Activated CD8-positive, alpha-beta T cell treated with anti-CD3 and anti-CD28 coated beads for 36 hours (primary cell): ENCODE measurements at regions of chr14 and their contacts with region 1.

Region 1: DNA sequence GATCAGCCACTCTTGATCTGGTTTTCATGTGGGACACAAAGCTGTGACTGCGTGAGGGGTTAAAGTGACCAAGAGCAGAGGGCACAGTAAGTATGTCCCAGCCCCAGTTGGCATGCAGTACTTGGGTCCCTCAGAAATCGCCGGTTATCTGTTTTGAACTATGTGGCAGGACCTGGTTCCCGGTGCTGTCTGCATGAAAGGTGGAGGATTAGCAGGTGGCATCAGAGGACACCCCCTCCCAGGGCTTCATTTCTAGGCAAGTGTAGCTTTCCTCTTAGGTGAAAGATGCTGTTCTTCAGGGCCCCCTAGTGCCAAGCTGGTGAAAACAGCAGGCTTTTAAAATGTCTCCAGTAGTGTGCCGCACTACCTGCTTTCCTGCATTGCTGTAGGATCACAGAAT is 57.1 kb downstream of the ATG14 start:
- DNase-seq: peak; percentile 71
- ATAC-seq: peak; percentile 94
- H3K4me3 Mint-ChIP-seq: no peak overlapping the region
- H3K27ac Mint-ChIP-seq: peak overlapping the region; percentile 74
- H3K4me1 Mint-ChIP-seq: peaks cover 18% of the 10 kb centered on the region
- H3K27me3 Mint-ChIP-seq: no peaks in the 10 kb centered on the region
- CTCF ChIP-seq: peak; percentile 74

Region 2: DNA sequence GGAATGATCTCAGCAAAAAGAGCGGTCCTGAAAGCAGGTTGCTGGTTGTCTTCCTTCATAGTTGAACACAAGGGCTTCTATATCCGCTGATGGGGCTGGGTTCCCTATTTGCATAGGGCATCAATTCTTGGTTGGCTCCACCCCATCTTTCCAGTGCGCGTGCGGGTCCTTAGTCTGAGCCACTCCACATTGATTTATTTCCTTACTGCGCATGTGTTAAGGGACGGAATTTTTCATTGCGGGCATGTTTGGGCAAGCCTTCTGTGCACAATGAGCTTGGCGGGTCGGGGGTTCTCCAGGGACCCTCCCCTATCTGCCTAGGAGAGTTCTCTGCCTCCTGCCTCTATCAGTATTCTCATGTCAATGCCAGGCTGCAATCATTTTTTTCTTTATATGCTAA is 141.9 kb before region 1 on chr14:
- CTCF ChIA-PET with region 1: interaction called, 38 read pairs
- POLR2A ChIA-PET with region 1: interaction called, 3 read pairs
- intact Hi-C with region 1: no loop called
- DNase-seq: no peak
- ATAC-seq: no peak
- H3K4me3 Mint-ChIP-seq: no peak overlapping the region
- H3K27ac Mint-ChIP-seq: no peak overlapping the region
- H3K4me1 Mint-ChIP-seq: peaks cover 2% of the 10 kb centered on the region
- H3K27me3 Mint-ChIP-seq: no peaks in the 10 kb centered on the region
- CTCF ChIP-seq: no peak

Region 3: DNA sequence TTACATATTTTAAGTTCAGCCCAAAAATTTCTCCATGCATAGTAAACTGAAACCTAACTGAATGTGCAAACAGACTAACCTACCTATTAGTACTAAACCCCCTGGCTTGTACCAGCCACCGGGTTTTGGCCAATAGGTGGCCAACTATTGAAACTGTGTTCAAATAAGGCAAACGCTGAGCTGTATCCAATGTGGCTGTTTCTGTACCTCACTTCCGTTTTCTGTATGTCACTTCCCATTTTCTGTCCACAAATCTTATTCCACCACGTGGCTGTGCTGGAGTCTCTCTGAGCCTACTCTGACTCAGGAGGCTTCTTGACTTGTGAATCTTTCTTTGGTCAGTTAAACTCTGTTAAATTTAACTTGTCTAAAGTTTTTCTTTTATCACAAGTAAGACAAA is 89.3 kb before region 1 on chr14:
- CTCF ChIA-PET with region 1: interaction called, 87 read pairs
- POLR2A ChIA-PET with region 1: interaction called, 5 read pairs
- intact Hi-C with region 1: loop called (anchors 2 kb)
- DNase-seq: peak; percentile 35
- ATAC-seq: peak; percentile 64
- H3K4me3 Mint-ChIP-seq: no peak overlapping the region
- H3K27ac Mint-ChIP-seq: no peak overlapping the region
- H3K4me1 Mint-ChIP-seq: peaks cover 3% of the 10 kb centered on the region
- H3K27me3 Mint-ChIP-seq: no peaks in the 10 kb centered on the region
- CTCF ChIP-seq: no peak

Region 4: DNA sequence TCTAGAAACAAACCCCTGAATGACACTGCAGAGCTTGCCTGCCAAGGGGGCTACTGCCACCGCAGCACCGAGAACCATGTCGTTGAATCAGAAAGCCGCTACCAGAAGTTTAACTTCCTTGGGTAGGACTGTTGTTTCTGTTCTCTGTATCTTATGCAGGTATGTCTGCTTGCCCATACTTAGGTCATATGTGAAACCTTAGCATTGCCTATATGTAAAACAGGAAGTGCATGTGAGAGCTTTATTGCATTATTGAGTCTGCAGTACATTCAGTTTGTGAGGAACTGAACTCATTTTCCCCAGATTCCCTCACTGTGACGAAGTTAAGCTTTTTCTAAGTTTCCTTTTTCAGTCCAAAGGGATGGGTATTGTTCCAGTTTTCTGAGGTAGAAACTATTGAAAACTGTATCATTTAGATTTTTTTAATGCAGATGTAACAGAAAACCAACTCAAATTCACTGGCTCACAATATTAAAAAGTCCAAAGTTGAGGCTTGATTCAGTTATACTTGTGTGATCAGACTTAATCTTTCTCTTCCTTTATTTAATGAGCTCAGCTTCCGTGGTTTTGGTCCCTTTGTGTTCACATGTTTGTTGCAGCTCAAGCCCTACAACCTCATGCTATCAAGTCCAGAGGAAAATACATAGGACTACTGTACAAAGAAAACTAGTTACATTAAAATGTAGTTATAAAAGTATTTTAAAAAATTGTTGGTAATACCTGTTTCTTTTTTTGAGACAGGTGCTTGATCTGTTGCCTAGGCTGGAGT is 76.3 kb before region 1 on chr14:
- CTCF ChIA-PET with region 1: interaction called, 87 read pairs
- POLR2A ChIA-PET with region 1: no interaction called
- intact Hi-C with region 1: no loop called
- DNase-seq: peak; percentile 38
- ATAC-seq: peak; percentile 85
- H3K4me3 Mint-ChIP-seq: peak overlapping the region; percentile 3
- H3K27ac Mint-ChIP-seq: peak overlapping the region; percentile 76
- H3K4me1 Mint-ChIP-seq: peaks cover 63% of the 10 kb centered on the region
- H3K27me3 Mint-ChIP-seq: no peaks in the 10 kb centered on the region
- CTCF ChIP-seq: no peak

Region 5: GRCh38 chr14:55333711-55334485 is 20.6 kb before region 1 on chr14:
- CTCF ChIA-PET with region 1: interaction called, 18 read pairs
- POLR2A ChIA-PET with region 1: no interaction called
- intact Hi-C with region 1: no loop called
- DNase-seq: peak; percentile 35
- ATAC-seq: peak; percentile 48
- H3K4me3 Mint-ChIP-seq: peak overlapping the region; percentile 38
- H3K27ac Mint-ChIP-seq: peak overlapping the region; percentile 87
- H3K4me1 Mint-ChIP-seq: peaks cover 79% of the 10 kb centered on the region
- H3K27me3 Mint-ChIP-seq: no peaks in the 10 kb centered on the region
- CTCF ChIP-seq: no peak

Region 6: GRCh38 chr14:55373784-55374705 is 19.5 kb after region 1 on chr14:
- CTCF ChIA-PET with region 1: interaction called, 11 read pairs
- POLR2A ChIA-PET with region 1: interaction called, 6 read pairs
- intact Hi-C with region 1: no loop called
- DNase-seq: peak; percentile 55
- ATAC-seq: peak; percentile 84
- H3K4me3 Mint-ChIP-seq: peak overlapping the region; percentile 58
- H3K27ac Mint-ChIP-seq: peak overlapping the region; percentile 98
- H3K4me1 Mint-ChIP-seq: peaks cover 46% of the 10 kb centered on the region
- H3K27me3 Mint-ChIP-seq: no peaks in the 10 kb centered on the region
- CTCF ChIP-seq: no peak